Right ventricle myocardium inferior (tissue), 1 donor: ENCODE measurements at regions of chr9 and their contacts with region 1.

Region 1: DNA sequence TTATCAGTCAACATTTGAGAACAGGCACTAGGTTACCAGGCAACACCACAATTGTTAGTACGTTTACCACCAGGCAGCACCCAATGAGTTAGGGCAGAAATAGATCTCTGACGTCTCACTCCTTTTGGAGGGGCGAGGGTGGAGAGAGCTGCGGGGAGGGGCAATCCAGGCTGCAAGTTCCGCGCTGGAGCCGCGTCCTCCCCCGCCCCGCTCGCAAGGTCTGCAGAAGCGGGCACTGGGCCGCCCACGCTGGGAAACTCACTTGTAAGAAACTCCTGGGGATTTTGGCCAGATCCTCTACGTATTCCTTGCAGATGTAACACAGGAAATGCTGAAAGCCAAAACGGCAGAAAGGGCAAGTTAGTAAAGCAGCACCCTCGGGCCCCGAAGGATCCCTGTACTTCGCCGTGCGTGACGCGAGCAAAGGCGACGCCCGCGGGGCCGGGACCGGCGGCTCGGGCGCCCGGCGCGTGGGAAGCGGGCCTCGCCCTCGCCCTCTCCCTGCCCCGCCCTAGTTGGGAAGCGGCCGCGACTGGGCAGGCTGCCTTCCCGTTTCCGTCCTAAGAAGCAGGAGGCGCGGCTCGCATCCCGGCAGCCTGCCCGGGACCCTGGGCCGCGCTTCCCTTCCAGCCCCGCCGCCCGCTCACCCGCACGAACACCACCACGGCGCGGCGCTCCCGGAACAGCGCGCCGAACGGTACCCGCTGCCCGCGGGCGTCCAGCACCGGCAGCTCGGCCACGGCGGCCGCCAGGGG is 497 bp downstream of the PRXL2C start:
- DNase-seq: peak; percentile 93
- ATAC-seq: peak; percentile 90

Region 2: DNA sequence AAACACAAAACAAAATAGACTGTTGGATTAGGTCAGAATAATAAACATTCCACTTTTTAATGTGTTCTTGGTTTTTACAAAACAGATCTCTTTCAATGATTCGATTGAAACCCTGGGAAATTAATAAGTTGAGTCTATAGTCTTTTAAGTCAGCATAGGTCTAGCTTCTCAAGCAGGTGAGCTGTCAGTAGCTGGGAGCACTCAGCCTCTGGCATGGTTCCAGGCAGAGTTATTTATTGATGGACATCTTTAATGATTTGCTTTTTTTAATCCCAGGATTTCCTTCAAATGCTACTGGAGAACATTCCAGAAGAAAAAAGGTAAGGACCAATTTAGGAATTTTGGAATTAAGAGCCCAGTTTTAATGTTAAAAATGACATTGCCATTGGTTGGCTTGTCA is 1687.1 kb before region 1 on chr9:
- intact Hi-C with region 1: loop called (anchors 10 kb)
- DNase-seq: no peak
- ATAC-seq: no peak

Region 3: DNA sequence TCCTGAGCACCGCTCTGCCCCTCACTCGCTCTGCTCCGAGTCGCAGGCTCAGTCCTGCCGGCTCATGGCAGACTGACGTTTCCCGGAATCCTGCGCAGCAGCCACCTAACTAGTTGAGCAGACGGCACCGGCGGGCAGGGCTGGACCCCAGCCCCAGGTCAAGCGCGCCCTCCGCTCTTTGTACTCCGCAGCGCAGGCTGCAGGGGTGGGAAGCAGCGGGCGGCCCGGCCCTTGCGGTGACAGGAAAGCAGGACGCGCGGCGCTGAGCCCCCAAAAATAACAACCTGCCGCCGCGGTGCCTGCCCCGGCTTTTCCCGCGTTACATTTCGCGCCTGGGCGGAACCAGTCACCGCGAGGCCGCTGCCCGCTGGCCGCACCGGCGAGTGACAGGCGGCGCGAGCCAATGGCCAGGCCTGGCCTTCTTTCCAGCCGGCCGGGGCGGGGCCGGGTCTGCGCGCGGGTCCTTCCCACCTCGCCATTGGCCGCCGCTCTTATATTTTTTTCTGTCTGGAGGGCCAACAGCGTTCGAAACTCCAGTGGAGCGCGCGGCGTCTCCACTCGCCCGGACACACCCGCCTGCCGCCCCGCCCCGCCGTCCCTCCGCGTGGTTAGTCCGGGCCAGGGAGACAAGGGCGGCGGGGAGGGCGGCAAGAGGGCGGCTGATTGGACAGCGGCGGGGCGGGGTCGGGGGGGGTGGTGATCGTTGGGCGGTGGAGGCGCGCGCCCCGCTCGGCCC is 236.4 kb before region 1 on chr9 and contains the start of gene ZNF367:
- intact Hi-C with region 1: loop called (anchors 1 kb)
- DNase-seq: peak; percentile 99
- ATAC-seq: peak; percentile 93
- total RNA-seq, gene ZNF367: 4.3 TPM

Region 4: GRCh38 chr9:96619491-96620154 is 35.0 kb before region 1 on chr9 and contains the start of gene CDC14B:
- intact Hi-C with region 1: loop called (anchors 2 kb)
- DNase-seq: peak; percentile 95
- ATAC-seq: peak; percentile 82
- total RNA-seq, gene CDC14B: 14.5 TPM

Region 5: GRCh38 chr9:96686548-96687335 is 32.1 kb after region 1 on chr9:
- intact Hi-C with region 1: loop called (anchors 2 kb)
- DNase-seq: peak; percentile 90
- ATAC-seq: peak; percentile 97